WTC11 (cell line): ENCODE measurements at regions of chr10 and their contacts with region 1.

Region 1: GRCh38 chr10:34906067-34906965 is 91.2 kb upstream of the PARD3 start:
- DNase-seq: peak; percentile 58
- ATAC-seq: peak; percentile 95
- H3K4me3 Mint-ChIP-seq: no peak overlapping the region
- H3K27ac Mint-ChIP-seq: peak overlapping the region; percentile 76
- H3K4me1 Mint-ChIP-seq: peaks cover 21% of the 10 kb centered on the region
- H3K27me3 Mint-ChIP-seq: no peaks in the 10 kb centered on the region
- CTCF ChIP-seq: no peak

Region 2: GRCh38 chr10:34938399-34938670 is 32.0 kb after region 1 on chr10:
- CTCF ChIA-PET with region 1: interaction called, 10 read pairs
- POLR2A ChIA-PET with region 1: no interaction called
- DNase-seq: no peak
- ATAC-seq: no peak
- H3K4me3 Mint-ChIP-seq: no peak overlapping the region
- H3K27ac Mint-ChIP-seq: no peak overlapping the region
- H3K4me1 Mint-ChIP-seq: peaks cover 43% of the 10 kb centered on the region
- H3K27me3 Mint-ChIP-seq: no peaks in the 10 kb centered on the region
- CTCF ChIP-seq: no peak